Activated naive CD4-positive, alpha-beta T cell treated with anti-CD3 and anti-CD28 coated beads, Interleukin-2, amount 10 ng/mL, durations not matched to agents 7 days and 5 days (primary cell): ENCODE measurements at regions of chr7 and their contacts with region 1.

Region 1: DNA sequence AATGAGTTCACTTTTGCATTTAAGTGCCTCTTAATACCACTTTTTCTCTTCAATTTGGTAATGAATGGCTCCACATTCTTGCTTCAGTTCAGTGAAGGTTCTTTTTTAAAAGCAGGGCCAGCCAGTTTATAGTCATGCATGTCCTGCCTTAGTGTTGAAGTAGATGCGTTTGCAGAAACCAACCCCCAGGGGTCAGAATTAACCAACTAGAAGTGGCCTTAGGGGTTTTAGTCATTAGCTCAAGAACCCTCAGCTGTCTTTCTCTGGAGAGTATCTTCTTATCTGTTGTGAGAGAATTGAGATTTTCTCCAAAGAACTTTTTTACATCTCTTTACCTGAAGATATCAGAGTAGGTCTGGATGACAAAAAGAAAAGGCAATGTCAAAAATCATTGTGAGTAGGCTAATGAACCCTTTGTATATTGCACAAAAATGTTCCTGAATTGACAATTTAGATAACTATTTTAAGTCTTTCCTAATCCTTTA is 82.2 kb downstream of the PIK3CG start:
- DNase-seq: peak; percentile 53
- H3K4me3 Mint-ChIP-seq: no peak overlapping the region
- H3K27ac Mint-ChIP-seq: no peak overlapping the region
- H3K4me1 Mint-ChIP-seq: no peaks in the 10 kb centered on the region
- H3K27me3 Mint-ChIP-seq: peaks cover 11% of the 10 kb centered on the region

Region 2: GRCh38 chr7:106793015-106793975 is 154.0 kb before region 1 on chr7:
- CTCF ChIA-PET with region 1: interaction called, 10 read pairs
- DNase-seq: peak; percentile 46
- H3K4me3 Mint-ChIP-seq: no peak overlapping the region
- H3K27ac Mint-ChIP-seq: no peak overlapping the region
- H3K4me1 Mint-ChIP-seq: no peaks in the 10 kb centered on the region
- H3K27me3 Mint-ChIP-seq: peaks cover 12% of the 10 kb centered on the region

Region 3: DNA sequence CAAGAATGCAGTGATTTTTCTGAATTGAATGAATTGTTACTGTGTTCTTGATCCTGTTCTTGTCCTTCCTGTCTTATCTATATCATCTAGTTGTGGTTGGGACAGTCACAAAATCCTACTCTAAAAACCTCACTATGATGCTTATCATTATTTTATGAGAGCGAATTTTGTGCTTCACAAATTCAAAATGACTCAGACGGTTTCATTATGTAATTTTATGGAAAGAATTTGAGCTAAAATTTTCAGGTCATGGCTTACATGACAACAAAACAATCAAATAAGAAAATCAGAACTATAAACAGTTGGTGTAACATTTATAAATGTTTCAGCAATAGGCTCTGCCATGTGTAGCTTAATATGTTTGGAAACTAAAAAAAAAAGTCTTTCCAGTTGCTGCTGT is 104.1 kb after region 1 on chr7:
- CTCF ChIA-PET with region 1: no interaction called
- DNase-seq: no peak
- H3K4me3 Mint-ChIP-seq: no peak overlapping the region
- H3K27ac Mint-ChIP-seq: no peak overlapping the region
- H3K4me1 Mint-ChIP-seq: peaks cover 3% of the 10 kb centered on the region
- H3K27me3 Mint-ChIP-seq: peaks cover 19% of the 10 kb centered on the region